Dendritic cell treated with granulocyte-macrophage colony-stimulating factor and Interleukin-4, amounts not matched to agents 40 ng/mL and 50 ng/mL, for 4 days (primary cell): ENCODE measurements at regions of chr4 and their contacts with region 1.

Region 1: DNA sequence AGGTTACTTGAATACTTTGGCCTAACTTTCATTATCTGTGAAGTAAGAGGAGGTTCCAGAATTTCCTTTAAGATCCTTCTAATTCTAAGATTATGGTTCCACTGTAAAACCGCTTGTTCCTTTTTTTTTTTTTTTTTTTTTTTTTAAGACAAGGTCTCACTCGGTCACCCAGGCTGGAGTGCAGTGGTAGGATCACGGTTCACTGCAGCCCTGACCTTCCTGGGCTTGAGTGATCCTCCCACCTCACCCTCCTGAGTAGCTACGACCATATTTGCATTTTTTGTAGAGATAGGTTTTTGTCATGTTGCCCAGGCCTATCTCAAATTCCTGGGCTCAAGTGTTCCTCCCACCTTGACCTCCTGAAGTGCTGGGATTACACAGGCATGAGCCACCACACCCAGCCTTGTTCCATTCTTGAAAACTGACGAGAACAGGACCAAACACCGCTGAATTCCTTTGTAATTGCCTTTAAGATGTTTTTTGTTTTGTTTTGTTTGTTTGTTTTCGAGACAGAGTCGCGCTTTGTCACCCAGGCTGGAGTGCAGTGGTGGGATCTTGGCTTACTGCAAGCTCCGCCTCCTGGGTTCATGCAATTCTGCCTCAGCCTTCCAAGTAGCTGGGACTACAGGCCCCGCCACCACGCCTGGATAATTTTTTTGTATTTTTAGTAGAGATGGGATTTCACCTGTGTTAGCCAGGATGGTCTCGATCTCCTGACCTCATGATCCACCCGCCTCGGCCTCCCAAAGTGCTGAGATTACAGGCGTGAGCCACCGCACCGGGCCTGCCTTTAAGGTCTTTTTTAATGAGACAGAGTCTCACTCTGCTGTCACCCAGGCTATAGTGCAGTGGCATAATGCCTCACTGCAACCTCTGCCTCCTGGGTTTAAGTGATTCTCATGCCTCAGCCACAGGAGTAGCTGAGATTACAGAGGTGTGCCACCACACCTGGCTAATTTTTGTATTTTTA is 6.8 kb downstream of the PDS5A start:
- H3K4me3 Mint-ChIP-seq: peak overlapping the region; percentile 66
- H3K27ac Mint-ChIP-seq: peak overlapping the region; percentile 78
- H3K4me1 Mint-ChIP-seq: peaks cover 46% of the 10 kb centered on the region
- H3K27me3 Mint-ChIP-seq: no peaks in the 10 kb centered on the region

Region 2: DNA sequence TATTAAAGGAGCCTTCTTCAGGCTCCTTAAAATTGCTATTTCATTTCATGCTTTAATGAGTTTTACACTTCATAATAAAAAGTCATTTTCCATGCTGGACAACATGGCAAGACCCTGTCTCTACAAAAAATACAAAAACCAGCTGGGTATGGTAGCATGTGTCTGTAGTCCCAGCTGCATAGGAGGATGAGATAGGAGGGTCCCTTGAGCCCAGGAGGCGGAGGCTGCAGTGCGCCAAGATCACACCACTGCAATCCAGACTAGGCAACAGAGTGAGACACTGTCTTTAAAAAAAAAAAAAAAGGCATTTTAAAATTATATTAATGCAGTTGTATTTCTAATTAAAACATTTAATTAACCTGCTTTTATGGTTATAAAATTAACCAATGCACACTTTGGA is 42.4 kb before region 1 on chr4:
- intact Hi-C with region 1: loop called (anchors 5 kb)
- H3K4me3 Mint-ChIP-seq: no peak overlapping the region
- H3K27ac Mint-ChIP-seq: no peak overlapping the region
- H3K4me1 Mint-ChIP-seq: peaks cover 22% of the 10 kb centered on the region
- H3K27me3 Mint-ChIP-seq: no peaks in the 10 kb centered on the region